Dorsolateral prefrontal cortex (tissue), 120 donors: ENCODE measurements at regions of chr14 and their contacts with region 1.

Region 1: GRCh38 chr14:89973234-89973823 is 17.6 kb downstream of the TDP1 start:
- DNase-seq: peak; percentile 60 to 88 (median 80)
- H3K4me3 ChIP-seq: no peak overlapping the region
- H3K27ac ChIP-seq: peak overlapping the region in 1 of 59 donors; percentile 10
- H3K27me3 ChIP-seq: no peaks in the 10 kb centered on the region
- CTCF ChIP-seq: peak; percentile 71 to 98 (median 91)

Region 2: DNA sequence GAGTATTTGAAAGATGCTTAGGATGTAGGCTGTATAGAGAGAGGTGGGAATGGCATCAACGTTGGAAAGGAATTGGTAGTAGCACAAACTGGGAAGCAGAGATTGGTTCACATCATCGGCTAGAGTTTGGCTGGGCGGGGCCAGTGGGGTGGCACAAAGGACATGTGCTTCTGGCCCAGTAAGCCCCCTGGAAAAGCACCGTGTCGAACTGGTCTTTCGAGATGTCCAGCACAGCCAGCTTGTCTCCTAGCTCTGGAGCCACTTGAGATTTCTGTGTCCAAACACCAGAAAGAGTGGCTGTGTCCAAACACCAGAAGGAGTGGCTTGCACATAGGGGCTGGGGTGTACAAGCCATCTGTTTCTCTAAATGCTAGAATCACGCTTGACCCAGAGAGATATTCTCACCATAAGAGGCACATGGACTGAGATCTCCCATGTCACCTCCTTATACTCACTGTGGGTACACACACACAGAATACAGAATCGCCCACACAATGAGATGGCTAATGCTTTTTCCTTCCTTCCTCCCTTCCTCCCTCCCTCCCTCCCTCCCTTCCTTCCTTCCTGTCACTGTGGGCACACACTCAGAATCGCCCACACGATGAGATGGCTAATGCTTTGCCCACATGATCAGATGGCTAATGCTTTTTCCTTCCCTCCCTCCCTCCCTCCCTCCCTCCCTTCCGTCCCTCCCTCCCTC is 46.6 kb after region 1 on chr14:
- intact Hi-C with region 1: loop called (anchors 2 to 5 kb)
- DNase-seq: no peak
- H3K4me3 ChIP-seq: peak overlapping the region in 1 of 59 donors; percentile 5
- H3K27ac ChIP-seq: peak overlapping the region in 39 of 59 donors; percentile 0 to 84 (median 57)
- H3K27me3 ChIP-seq: no peaks in the 10 kb centered on the region
- CTCF ChIP-seq: no peak

Region 3: DNA sequence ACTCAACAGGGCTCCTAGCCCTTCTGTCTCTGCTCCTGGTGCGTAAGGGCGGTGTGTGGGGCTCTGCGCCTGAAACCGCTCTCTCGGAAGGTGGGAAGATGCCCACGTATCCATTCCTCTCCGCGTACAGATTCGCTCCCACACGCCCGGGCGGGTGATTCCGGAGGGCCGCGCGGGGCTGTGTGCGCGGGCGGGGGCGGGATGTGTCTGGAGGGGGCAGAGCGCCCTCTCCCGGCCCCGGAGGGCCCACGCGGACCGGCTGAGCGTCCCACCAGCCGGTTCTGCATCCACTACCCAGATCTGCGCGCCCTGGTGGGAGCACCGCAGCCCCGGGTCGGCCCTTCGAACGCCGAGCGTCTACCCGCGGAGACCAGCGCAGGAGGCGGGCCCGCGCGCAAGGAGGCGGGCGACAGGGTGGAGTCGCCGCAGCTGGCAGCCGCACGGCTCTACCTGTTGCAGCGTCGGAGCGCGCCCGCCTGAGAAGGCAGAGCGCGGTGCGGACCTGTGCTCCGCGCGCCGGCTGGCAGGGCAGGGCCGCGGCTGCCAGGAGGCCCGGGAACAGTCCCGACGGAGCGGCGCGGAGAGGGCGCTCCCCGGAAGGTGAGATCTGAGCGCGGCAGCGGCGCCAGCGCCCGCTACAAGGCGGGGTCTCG is 87.1 kb after region 1 on chr14:
- intact Hi-C with region 1: loop called (anchors 1 to 2 kb)
- DNase-seq: peak; percentile 26 to 81 (median 62)
- H3K4me3 ChIP-seq: peak overlapping the region; percentile 39 to 75 (median 60)
- H3K27ac ChIP-seq: peak overlapping the region in 1 of 59 donors; percentile 37
- H3K27me3 ChIP-seq: peaks cover 0 to 58% (median 25%) of the 10 kb centered on the region in 45 donors
- CTCF ChIP-seq: peak in 55 of 56 donors; percentile 33 to 95 (median 78)